Activated CD8-positive, alpha-beta T cell treated with anti-CD3 and anti-CD28 coated beads, Interleukin-2, amount 10 ng/mL, durations not matched to agents 7 days and 5 days (primary cell): ENCODE measurements at regions of chr2 and their contacts with region 1.

Region 1: GRCh38 chr2:174748948-174749347 is 15.3 kb downstream of the CHRNA1 start:
- DNase-seq: peak; percentile 82
- ATAC-seq: peak; percentile 62
- H3K4me3 Mint-ChIP-seq: no peak overlapping the region
- H3K27ac Mint-ChIP-seq: no peak overlapping the region
- H3K4me1 Mint-ChIP-seq: peaks cover 37% of the 10 kb centered on the region
- H3K27me3 Mint-ChIP-seq: peaks cover 13% of the 10 kb centered on the region

Region 2: GRCh38 chr2:174697255-174697654 is 51.7 kb before region 1 on chr2:
- CTCF ChIA-PET with region 1: interaction called, 138 read pairs
- POLR2A ChIA-PET with region 1: interaction called, 3 read pairs
- DNase-seq: peak; percentile 81
- ATAC-seq: peak; percentile 96
- H3K4me3 Mint-ChIP-seq: no peak overlapping the region
- H3K27ac Mint-ChIP-seq: no peak overlapping the region
- H3K4me1 Mint-ChIP-seq: peaks cover 6% of the 10 kb centered on the region
- H3K27me3 Mint-ChIP-seq: peaks cover 20% of the 10 kb centered on the region

Region 3: DNA sequence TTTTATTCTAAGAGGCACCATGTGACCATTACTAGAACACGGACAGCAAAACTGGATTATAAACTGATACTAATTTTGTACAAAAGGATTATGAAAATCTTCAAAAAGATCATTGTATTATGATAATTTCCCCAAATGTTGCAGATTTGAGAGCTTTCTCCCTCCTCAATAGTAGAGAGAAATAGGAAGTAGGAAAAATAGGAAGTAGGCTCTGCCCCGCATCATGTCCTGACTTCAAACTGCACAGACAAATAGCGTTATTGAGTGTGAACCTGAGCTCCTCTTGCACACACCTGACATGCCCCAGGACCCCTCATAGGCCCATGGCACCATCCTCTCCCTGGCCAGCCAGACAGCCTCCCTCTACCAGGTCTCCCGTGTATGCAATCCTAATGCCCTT is 10.1 kb before region 1 on chr2:
- CTCF ChIA-PET with region 1: interaction called, 23 read pairs
- POLR2A ChIA-PET with region 1: no interaction called
- DNase-seq: no peak
- ATAC-seq: no peak
- H3K4me3 Mint-ChIP-seq: no peak overlapping the region
- H3K27ac Mint-ChIP-seq: no peak overlapping the region
- H3K4me1 Mint-ChIP-seq: no peaks in the 10 kb centered on the region
- H3K27me3 Mint-ChIP-seq: peaks cover 23% of the 10 kb centered on the region

Region 4: DNA sequence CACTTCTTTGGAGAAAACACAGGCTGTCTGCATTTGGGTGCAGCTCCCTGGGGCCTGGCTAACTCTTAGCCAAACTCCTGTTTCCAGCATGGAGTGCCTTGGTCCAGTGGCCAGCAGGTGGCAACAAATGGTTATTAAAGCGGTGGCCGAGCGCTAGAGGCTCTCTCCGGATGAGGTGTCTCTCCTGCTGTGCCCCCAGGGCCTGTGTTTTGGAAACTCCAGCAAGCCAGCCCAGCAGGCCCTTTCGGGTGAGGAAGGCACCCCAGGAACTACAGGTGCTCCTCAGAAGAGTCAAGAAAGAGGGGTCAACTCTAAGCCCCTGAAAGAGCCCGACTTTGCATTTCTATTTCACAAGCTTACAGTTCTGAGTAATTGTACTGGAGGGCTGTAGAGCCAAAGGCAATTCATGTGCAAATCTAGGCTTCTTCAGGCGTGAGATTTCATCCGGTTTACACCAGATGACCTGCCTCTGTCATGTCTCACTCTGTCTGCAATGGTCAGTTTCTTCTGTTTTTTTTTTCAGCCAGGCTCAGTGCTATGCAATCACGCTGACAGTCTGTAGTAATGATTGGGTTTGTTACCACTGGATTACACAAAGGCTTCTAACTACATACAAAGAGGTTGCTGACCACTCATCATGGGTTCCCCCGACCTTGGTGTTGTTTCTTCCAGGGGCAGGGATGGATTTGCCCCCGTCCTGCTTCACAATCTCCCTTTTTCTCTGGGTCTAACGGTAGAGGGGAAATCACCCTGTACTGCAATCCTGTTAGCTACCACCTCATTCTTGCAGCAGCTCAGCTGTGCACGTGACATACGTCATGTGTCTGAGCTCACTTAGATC is 22.9 kb after region 1 on chr2:
- CTCF ChIA-PET with region 1: interaction called, 40 read pairs
- POLR2A ChIA-PET with region 1: interaction called, 4 read pairs
- DNase-seq: peak; percentile 65
- ATAC-seq: peak; percentile 75
- H3K4me3 Mint-ChIP-seq: no peak overlapping the region
- H3K27ac Mint-ChIP-seq: no peak overlapping the region
- H3K4me1 Mint-ChIP-seq: peaks cover 18% of the 10 kb centered on the region
- H3K27me3 Mint-ChIP-seq: peaks cover 4% of the 10 kb centered on the region

Region 5: GRCh38 chr2:174786066-174786725 is 37.2 kb after region 1 on chr2:
- CTCF ChIA-PET with region 1: interaction called, 10 read pairs
- POLR2A ChIA-PET with region 1: no interaction called
- DNase-seq: no peak
- ATAC-seq: no peak
- H3K4me3 Mint-ChIP-seq: no peak overlapping the region
- H3K27ac Mint-ChIP-seq: no peak overlapping the region
- H3K4me1 Mint-ChIP-seq: peaks cover 11% of the 10 kb centered on the region
- H3K27me3 Mint-ChIP-seq: no peaks in the 10 kb centered on the region

Region 6: DNA sequence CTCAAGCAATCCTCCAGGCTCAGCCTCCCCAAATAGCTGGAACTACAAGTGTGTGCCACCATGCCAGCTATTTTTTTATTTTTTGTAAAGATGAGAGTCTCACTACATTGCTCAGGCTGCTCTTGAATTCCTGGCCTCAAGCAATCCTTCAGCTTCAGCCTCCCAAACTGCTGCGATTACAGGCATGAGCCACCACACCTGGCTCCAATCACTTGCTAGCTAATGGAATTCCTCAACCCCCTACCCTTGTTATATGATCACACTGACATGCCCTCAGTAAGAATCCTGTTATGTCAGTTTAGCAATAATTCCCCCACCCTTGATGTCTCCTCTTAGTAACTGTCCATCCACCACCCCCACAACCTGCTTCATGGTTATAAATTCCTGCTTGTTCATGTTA is 243.9 kb after region 1 on chr2:
- CTCF ChIA-PET with region 1: interaction called, 36 read pairs
- POLR2A ChIA-PET with region 1: no interaction called
- DNase-seq: no peak
- ATAC-seq: no peak
- H3K4me3 Mint-ChIP-seq: no peak overlapping the region
- H3K27ac Mint-ChIP-seq: no peak overlapping the region
- H3K4me1 Mint-ChIP-seq: peaks cover 2% of the 10 kb centered on the region
- H3K27me3 Mint-ChIP-seq: peaks cover 12% of the 10 kb centered on the region